Transverse colon (tissue), 4 donors: ENCODE measurements at regions of chr3 and their contacts with region 1.

Region 1: DNA sequence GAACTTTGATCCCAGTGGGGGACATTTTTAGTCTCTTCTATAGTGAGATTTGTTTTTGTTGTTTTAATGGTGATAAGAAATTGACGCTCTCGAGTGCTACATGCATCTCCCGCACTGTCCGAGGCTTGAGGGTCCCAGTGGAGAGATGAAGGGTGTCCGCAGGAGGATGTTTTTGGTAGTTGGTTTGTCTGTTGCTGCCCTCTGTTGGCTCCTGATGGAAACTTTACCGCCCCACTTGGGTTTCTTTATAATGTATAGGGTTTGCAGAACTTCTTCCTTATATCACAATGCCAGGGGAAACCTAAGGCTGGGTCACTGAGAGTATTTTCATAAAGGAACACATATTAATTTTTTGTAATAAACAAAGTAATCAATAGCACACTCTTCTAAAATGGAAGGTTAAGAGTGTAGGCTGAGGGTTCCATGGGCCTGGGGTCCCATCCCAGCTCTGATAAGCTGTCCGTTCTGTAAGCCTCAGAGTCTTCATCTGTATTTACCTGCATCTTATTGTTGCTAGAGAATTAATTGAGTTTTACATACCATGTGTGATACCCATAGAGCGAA is 185.3 kb upstream of the FEZF2 start:
- DNase-seq: no peak
- H3K4me3 ChIP-seq: no peak overlapping the region
- H3K27ac ChIP-seq: no peak overlapping the region
- H3K4me1 ChIP-seq: no peaks in the 10 kb centered on the region
- H3K27me3 ChIP-seq: no peaks in the 10 kb centered on the region
- CTCF ChIP-seq: peak in 4 of 5 experiments; percentile 6 to 32 (median 18)
- EP300 ChIP-seq: no peak
- POLR2A ChIP-seq: no peak

Region 2: GRCh38 chr3:61956236-61956635 is 602.4 kb before region 1 on chr3:
- in situ Hi-C with region 1: no loop called
- intact Hi-C with region 1: loop called (anchors 10 kb)
- DNase-seq: no peak
- H3K4me3 ChIP-seq: no peak overlapping the region
- H3K27ac ChIP-seq: peak overlapping the region in 2 of 4 donors; percentile 13 to 31
- H3K4me1 ChIP-seq: peaks cover 0 to 4% (median 0%) of the 10 kb centered on the region in 4 donors
- H3K27me3 ChIP-seq: no peaks in the 10 kb centered on the region
- CTCF ChIP-seq: no peak
- EP300 ChIP-seq: no peak
- POLR2A ChIP-seq: no peak

Region 3: GRCh38 chr3:62201438-62202035 is 357.1 kb before region 1 on chr3:
- in situ Hi-C with region 1: loop called in 3 of 4 experiments (anchors 10 to 25 kb)
- intact Hi-C with region 1: no loop called
- DNase-seq: no peak
- H3K4me3 ChIP-seq: no peak overlapping the region
- H3K27ac ChIP-seq: no peak overlapping the region
- H3K4me1 ChIP-seq: no peaks in the 10 kb centered on the region
- H3K27me3 ChIP-seq: no peaks in the 10 kb centered on the region
- CTCF ChIP-seq: peak; percentile 36 to 52 (median 47)
- EP300 ChIP-seq: no peak
- POLR2A ChIP-seq: no peak

Region 4: DNA sequence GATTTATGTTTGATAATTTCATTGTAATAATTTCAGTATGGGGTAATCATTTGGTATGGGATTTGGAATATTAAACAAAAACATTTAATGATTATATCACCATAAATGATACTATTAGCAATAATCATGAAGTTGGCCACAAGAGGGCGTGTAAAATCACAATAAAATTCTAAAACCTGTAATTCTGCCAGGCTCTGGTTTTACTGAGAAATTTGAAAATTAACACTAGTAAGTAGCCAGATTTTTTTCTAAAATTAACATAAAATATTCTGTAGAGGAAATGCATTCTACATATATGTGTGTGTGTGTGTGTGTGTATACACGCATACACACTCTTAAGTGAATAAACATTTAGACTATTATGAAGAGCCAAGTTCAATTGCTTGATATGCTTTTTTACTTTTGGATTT is 225.8 kb before region 1 on chr3:
- in situ Hi-C with region 1: loop called in 1 of 4 experiments (anchors 25 kb)
- intact Hi-C with region 1: no loop called
- DNase-seq: no peak
- H3K4me3 ChIP-seq: no peak overlapping the region
- H3K27ac ChIP-seq: no peak overlapping the region
- H3K4me1 ChIP-seq: no peaks in the 10 kb centered on the region
- H3K27me3 ChIP-seq: no peaks in the 10 kb centered on the region
- CTCF ChIP-seq: peak in 4 of 5 experiments; percentile 37 to 46 (median 44)
- EP300 ChIP-seq: no peak
- POLR2A ChIP-seq: no peak

Region 5: GRCh38 chr3:62436785-62437184 is 121.8 kb before region 1 on chr3:
- in situ Hi-C with region 1: no loop called
- intact Hi-C with region 1: no loop called
- DNase-seq: no peak
- H3K4me3 ChIP-seq: no peak overlapping the region
- H3K27ac ChIP-seq: no peak overlapping the region
- H3K4me1 ChIP-seq: no peaks in the 10 kb centered on the region
- H3K27me3 ChIP-seq: no peaks in the 10 kb centered on the region
- CTCF ChIP-seq: no peak
- EP300 ChIP-seq: no peak
- POLR2A ChIP-seq: no peak